Prostate gland (tissue), 2 donors: ENCODE measurements at regions of chr18 and their contacts with region 1.

Region 1: DNA sequence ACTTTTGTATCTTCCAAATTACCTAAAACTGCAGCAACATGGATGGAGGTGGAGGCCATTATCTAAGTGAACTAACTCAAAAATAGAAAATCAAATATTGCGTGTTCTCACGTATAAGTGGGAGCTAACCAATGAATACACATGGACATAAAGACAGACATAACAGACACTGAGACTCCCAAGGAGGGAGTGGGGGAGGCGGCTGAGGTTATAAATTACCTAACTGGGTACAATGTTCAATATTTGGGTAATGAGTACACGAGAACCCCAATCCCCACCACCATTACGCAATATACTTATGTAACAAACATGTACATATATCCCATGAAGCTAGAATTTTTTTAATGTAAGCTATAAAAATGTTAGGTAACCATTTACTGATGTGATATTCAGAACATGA is 119.8 kb downstream of the RTTN start:
- DNase-seq: no peak
- H3K4me3 ChIP-seq: no peak overlapping the region
- H3K27ac ChIP-seq: no peak overlapping the region
- H3K4me1 ChIP-seq: no peaks in the 10 kb centered on the region
- H3K27me3 ChIP-seq: no peaks in the 10 kb centered on the region
- CTCF ChIP-seq: no peak
- POLR2A ChIP-seq: no peak

Region 2: GRCh38 chr18:68847219-68847837 is 1238.3 kb before region 1 on chr18:
- intact Hi-C with region 1: loop called (anchors 5 kb)
- DNase-seq: no peak
- H3K4me3 ChIP-seq: no peak overlapping the region
- H3K27ac ChIP-seq: no peak overlapping the region
- H3K4me1 ChIP-seq: no peaks in the 10 kb centered on the region
- H3K27me3 ChIP-seq: no peaks in the 10 kb centered on the region
- CTCF ChIP-seq: peak in 3 of 4 experiments; percentile 36 to 44 (median 41)
- POLR2A ChIP-seq: no peak

Region 3: DNA sequence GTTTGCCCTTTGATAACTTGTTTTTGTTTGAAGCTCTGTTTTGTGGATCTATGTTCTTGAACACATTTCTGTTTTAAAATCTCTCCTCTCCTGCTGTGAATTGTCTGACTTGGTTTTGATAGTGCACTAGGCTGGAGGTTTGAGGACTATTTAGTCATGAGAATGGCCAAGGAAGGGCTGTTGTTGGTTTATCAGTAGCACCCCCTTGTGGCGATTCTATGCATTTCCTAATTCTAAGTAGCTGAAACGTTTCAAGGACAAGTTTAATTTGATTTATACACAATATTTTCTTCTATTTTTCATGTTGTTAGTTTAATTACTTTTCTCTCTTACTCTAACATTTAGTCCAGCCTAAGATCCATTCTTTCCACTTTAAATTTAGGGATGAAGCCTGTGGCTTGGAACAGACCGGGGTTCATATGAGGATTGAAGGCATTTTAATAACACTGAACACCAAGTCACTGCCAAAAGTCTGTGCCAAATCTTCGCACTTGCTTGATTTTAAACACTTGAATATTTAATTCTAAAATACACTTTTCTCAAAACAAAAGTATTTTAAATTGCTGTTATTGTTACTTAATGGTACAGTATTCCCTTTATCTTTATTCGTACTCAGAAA is 369.2 kb after region 1 on chr18:
- intact Hi-C with region 1: no loop called
- DNase-seq: peak; percentile 44
- H3K4me3 ChIP-seq: no peak overlapping the region
- H3K27ac ChIP-seq: no peak overlapping the region
- H3K4me1 ChIP-seq: no peaks in the 10 kb centered on the region
- H3K27me3 ChIP-seq: no peaks in the 10 kb centered on the region
- CTCF ChIP-seq: peak; percentile 15 to 69 (median 61)
- POLR2A ChIP-seq: no peak